Gastrocnemius medialis (tissue), 4 donors: ENCODE measurements at regions of chr4 and their contacts with region 1.

Region 1: GRCh38 chr4:140153718-140154571 is at the start of gene MAML3:
- DNase-seq: peak; percentile 91 to 93
- ATAC-seq: peak; percentile 69 to 74
- H3K4me3 ChIP-seq: peak within 1 kb of the TSS; percentile 68 to 92 (median 88)
- H3K27ac ChIP-seq: peak within 1 kb of the TSS; percentile 93 to 97 (median 94)
- H3K4me1 ChIP-seq: peaks cover 0 to 11% of the 10 kb centered on the region in 2 donors
- H3K27me3 ChIP-seq: no peaks in the 10 kb centered on the region
- CTCF ChIP-seq: peak in 4 of 5 experiments; percentile 4 to 40 (median 21)
- POLR2A ChIP-seq: peak; percentile 55 to 84
- total RNA-seq, gene MAML3: 0.98 to 1.5 (median 1.4) TPM

Region 2: GRCh38 chr4:139453371-139454110 is 700.4 kb before region 1 on chr4:
- in situ Hi-C with region 1: no loop called
- intact Hi-C with region 1: loop called (anchors 10 kb)
- DNase-seq: peak; percentile 96
- ATAC-seq: peak; percentile 95
- H3K4me3 ChIP-seq: peak overlapping the region; percentile 69 to 98 (median 80)
- H3K27ac ChIP-seq: peak overlapping the region; percentile 88 to 96 (median 95)
- H3K4me1 ChIP-seq: peaks cover 30 to 38% of the 10 kb centered on the region in 2 donors
- H3K27me3 ChIP-seq: no peaks in the 10 kb centered on the region
- CTCF ChIP-seq: peak in 2 of 5 experiments; percentile 6 to 9
- POLR2A ChIP-seq: no peak

Region 3: DNA sequence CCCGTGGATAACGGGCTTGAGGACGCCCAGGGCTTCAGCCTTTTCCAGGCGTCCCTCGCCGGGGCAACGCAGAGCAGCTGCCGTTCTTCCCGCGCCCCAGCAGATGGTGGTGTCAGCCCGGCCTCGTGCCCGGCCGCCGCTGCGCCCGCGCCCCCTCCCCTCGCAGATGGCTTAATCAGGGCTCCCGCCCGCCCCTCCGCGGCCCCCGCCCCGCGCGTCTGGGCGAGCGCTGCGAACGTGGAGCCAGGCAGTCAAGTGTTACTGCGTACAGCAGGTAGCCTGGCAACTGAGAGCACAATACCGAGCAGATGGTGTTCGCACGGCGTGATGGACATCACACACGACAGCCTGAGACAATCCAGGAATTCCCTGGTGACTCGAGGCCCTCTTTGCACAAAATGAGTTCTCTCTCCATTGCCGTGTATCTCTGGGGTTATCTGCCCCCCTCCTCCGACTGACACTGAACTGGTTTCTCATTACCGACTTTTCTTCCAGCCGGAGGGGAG is 419.0 kb before region 1 on chr4:
- in situ Hi-C with region 1: loop called in 3 of 4 experiments (anchors 5 to 25 kb)
- intact Hi-C with region 1: loop called (anchors 1 kb)
- DNase-seq: peak; percentile 69 to 79
- ATAC-seq: peak; percentile 84 to 86
- H3K4me3 ChIP-seq: peak overlapping the region; percentile 56 to 70 (median 64)
- H3K27ac ChIP-seq: peak overlapping the region; percentile 70 to 85 (median 74)
- H3K4me1 ChIP-seq: peaks cover 23 to 27% of the 10 kb centered on the region in 2 donors
- H3K27me3 ChIP-seq: no peaks in the 10 kb centered on the region
- CTCF ChIP-seq: peak; percentile 71 to 94 (median 86)
- POLR2A ChIP-seq: no peak

Region 4: DNA sequence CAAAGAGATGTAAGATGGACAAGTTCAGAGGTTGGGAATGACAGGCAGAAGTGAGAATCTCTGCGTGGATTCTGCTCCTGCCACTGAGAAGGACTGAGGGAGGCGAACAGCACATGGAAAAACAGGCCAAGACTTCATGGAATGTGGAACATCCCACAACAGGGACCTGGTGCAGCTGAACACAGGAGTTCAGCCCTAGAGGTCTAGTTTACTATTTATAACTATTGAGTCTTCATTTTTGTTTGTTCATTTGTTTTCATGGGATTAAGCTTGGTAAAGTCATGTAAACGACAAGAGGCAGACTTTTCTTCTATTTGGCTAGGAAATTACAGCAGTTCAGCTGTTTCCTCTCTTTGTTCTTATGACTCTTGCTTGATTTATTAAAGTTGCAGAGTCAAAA is 234.4 kb before region 1 on chr4:
- in situ Hi-C with region 1: no loop called
- intact Hi-C with region 1: loop called (anchors 5 kb)
- DNase-seq: no peak
- ATAC-seq: peak; percentile 34 to 45
- H3K4me3 ChIP-seq: no peak overlapping the region
- H3K27ac ChIP-seq: peak overlapping the region; percentile 45 to 68 (median 54)
- H3K4me1 ChIP-seq: peaks cover 45 to 48% of the 10 kb centered on the region in 2 donors
- H3K27me3 ChIP-seq: no peaks in the 10 kb centered on the region
- CTCF ChIP-seq: no peak
- POLR2A ChIP-seq: no peak

Region 5: DNA sequence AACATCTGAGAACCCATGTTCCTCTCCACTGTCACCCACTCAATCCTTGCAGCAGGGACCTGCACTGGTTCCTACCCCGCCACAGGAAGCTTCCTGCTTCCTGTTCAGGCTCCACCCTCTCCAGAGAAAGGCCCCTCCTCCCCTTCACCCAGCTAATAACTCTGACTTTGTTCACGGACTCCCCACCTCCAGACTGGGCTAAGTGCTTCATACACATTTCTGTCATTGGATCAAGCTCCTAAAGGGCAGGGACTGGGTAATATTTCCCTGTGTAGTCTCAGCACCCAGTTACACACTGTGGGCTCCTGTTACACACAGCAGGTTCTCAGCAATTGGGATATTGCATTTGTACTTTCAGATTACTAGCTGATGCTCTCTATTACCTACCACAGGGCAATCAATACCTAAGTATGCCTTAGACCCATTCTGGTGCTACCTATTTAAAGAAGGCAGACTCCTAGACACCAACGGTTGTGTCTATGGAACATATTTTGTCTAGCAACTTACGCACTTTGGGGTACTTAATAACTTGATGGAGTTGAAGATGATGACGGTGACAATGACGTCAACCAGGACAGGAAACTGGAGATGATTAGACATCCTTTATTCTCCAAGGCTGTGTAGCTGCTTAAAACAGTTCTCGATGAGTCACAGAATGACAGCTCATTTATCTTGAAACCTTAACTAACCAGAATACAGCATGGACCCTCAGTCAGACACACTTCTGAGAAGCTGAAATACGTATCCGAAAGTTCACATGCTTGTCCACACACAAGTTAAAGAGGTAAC is 58.1 kb before region 1 on chr4:
- in situ Hi-C with region 1: loop called in 1 of 4 experiments (anchors 10 kb)
- intact Hi-C with region 1: loop called (anchors 2 kb)
- DNase-seq: peak in 1 of 2 donors; percentile 31
- ATAC-seq: peak; percentile 2 to 21
- H3K4me3 ChIP-seq: peak overlapping the region in 1 of 4 donors; percentile 6
- H3K27ac ChIP-seq: peak overlapping the region; percentile 75 to 81 (median 76)
- H3K4me1 ChIP-seq: peaks cover 56 to 78% of the 10 kb centered on the region in 2 donors
- H3K27me3 ChIP-seq: no peaks in the 10 kb centered on the region
- CTCF ChIP-seq: no peak
- POLR2A ChIP-seq: peak in 1 of 2 donors; percentile 11

Region 6: GRCh38 chr4:140252742-140253555 is 99.0 kb after region 1 on chr4:
- in situ Hi-C with region 1: loop called in 1 of 4 experiments (anchors 5 kb)
- intact Hi-C with region 1: loop called (anchors 1 kb)
- DNase-seq: peak; percentile 29 to 39
- ATAC-seq: peak; percentile 66 to 72
- H3K4me3 ChIP-seq: peak overlapping the region; percentile 58 to 75 (median 66)
- H3K27ac ChIP-seq: peak overlapping the region; percentile 75 to 86 (median 80)
- H3K4me1 ChIP-seq: peaks cover 13 to 23% of the 10 kb centered on the region in 2 donors
- H3K27me3 ChIP-seq: no peaks in the 10 kb centered on the region
- CTCF ChIP-seq: peak; percentile 69 to 99 (median 87)
- POLR2A ChIP-seq: no peak

Region 7: DNA sequence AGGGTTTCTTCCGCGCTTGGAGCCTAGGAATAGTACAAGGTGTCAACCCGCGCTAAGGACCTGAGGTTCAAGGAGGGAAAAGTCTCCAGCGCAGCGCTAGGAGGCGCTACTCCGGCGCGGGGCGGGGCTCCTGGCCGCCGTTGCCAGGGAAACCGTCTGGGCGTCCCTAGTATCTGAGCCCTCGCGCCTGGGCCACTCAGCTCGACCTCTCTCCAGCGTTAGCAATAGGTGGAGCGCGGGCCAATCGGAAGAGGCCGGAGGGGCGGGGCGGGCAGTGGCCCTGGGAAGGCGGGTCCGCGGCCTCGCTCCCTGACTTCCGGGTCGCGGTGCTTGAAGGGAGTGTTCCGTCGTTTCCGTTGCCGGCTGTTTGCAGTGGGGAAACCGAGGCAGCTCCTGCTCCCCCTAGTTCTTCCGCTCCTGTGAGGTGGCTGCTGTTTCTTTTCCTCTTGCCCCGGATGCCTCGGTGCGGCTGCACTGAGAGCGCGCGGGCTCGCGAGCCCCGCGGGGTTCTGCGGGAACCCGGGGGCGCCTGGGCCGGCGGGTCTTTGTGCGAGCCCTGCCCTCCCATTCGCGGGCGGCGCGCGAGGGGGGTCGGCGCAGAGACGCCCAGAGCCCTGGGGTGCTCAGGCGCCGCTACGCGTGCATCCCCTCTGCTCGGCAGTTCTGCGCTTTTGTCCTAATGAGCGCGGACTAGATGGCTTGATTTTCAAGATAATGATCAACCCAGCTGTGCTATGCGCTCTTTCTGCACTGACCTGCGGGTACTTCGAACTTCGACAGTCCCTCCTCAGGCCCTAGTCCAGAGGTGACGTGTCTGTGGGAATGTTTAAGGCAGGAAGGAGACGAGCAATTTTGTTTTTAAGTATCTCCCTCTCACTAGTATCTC is 370.2 kb after region 1 on chr4 and contains the start of gene ELMOD2:
- in situ Hi-C with region 1: no loop called
- intact Hi-C with region 1: loop called (anchors 5 kb)
- DNase-seq: peak; percentile 97 to 98
- ATAC-seq: peak; percentile 99
- H3K4me3 ChIP-seq: peak within 1 kb of the TSS; percentile 67 to 87 (median 86)
- H3K27ac ChIP-seq: peak within 1 kb of the TSS; percentile 76 to 90 (median 81)
- H3K4me1 ChIP-seq: peaks cover 2 to 18% of the 10 kb centered on the region in 2 donors
- H3K27me3 ChIP-seq: no peaks in the 10 kb centered on the region
- CTCF ChIP-seq: peak; percentile 71 to 94 (median 81)
- POLR2A ChIP-seq: peak in 1 of 2 donors; percentile 34
- total RNA-seq, gene ELMOD2: 3.2 to 13.7 (median 10.9) TPM